ENCODE measurements at regions of chr7 and their contacts with region 1.

Region 1: GRCh38 chr7:32942786-32943653 is 14.2 kb upstream of the FKBP9 start:
- DNase-seq: peak; percentile 68 to 89
- H3K4me3 ChIP-seq: peak overlapping the region; percentile 69 to 87
- H3K27ac ChIP-seq: peak overlapping the region; percentile 90 to 92
- H3K4me1 ChIP-seq: peaks cover 0 to 27% (median 8%) of the 10 kb centered on the region in 4 donors
- H3K27me3 ChIP-seq: no peaks in the 10 kb centered on the region
- CTCF ChIP-seq: peak; percentile 47 to 69

Region 2: DNA sequence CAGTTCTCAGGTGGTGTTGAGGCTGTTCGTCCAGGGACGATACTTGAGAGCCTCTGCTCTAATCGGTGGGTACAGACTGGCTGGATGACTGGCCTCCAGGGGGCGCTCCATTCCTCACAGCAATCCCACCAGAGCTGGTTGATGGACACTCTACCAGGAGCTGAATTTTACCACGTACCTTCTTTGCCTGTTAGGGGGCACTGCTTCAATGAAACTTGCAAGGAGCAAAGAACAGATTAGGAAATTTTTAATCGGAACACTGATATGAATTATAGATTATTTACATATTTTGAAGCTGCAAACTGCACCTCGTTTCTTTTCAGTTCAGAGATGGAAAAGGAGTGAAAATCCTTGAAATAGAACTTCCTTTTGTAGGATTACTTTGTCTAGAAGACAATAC is 96.3 kb before region 1 on chr7:
- intact Hi-C with region 1: loop called (anchors 5 kb)
- DNase-seq: peak; percentile 92 to 93
- H3K4me3 ChIP-seq: no peak overlapping the region
- H3K27ac ChIP-seq: no peak overlapping the region
- H3K4me1 ChIP-seq: peaks cover 0 to 8% (median 3%) of the 10 kb centered on the region in 4 donors
- H3K27me3 ChIP-seq: no peaks in the 10 kb centered on the region
- CTCF ChIP-seq: peak; percentile 82 to 87

Region 3: GRCh38 chr7:33310541-33310940 is 367.5 kb after region 1 on chr7:
- intact Hi-C with region 1: no loop called
- DNase-seq: no peak
- H3K4me3 ChIP-seq: no peak overlapping the region
- H3K27ac ChIP-seq: no peak overlapping the region
- H3K4me1 ChIP-seq: no peaks in the 10 kb centered on the region
- H3K27me3 ChIP-seq: no peaks in the 10 kb centered on the region
- CTCF ChIP-seq: no peak